ENCODE measurements at regions of chr1 and their contacts with region 1.

Region 1: GRCh38 chr1:180563026-180563827 is 4.5 kb downstream of the OVAAL start:
- DNase-seq: peak in 2 of 5 donors; percentile 35 to 40
- ATAC-seq: peak; percentile 59 to 81 (median 77)
- H3K4me3 ChIP-seq: no peak overlapping the region
- H3K27ac ChIP-seq: peak overlapping the region; percentile 65 to 92 (median 82)
- H3K4me1 ChIP-seq: peaks cover 5 to 71% (median 39%) of the 10 kb centered on the region in 12 donors
- H3K27me3 ChIP-seq: no peaks in the 10 kb centered on the region
- CTCF ChIP-seq: no peak
- POLR2A ChIP-seq: no peak

Region 2: DNA sequence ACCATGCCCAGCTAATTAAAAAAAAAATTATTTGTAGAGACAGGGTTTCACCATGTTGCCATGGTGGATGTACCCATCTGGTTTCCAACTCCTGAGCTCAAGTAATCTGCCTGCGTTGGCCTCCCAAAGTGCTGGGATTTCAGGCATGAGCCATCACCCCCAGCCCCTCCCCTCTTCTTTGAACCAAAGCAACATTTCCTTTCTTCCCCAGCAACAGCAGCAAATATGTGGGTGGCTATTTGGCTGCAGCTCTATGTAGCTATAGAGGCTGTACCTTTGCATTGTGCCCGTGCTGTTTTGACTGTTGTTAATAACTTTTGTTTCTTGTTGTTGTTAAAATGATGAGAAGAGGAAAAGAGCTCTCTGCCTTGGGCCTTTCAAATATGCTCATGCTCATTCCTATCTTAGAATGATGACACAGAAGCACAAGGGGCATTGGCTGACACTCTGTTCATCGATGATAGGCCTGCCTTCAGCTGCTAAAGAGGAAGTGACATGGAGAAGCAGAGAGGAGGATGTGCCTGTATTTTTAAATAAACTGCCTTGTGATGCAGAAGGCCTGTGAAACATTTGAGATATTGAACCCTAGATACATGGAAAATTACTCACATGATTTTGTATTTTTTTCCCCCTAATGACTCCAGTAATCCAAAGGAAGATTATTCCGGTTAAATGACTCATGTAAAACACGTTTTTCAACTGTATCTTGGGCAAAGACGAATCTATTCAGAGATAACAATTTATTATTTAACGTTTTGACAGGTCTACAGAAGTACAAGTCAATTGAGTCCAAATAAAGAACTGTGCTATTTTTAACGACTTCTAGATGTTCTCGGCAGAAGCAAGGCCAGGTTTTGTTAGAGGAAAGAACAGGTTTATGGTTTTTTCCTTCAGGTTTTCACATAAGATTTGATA is 48.0 kb after region 1 on chr1:
- intact Hi-C with region 1: loop called in 1 of 10 experiments (anchors 5 kb)
- DNase-seq: peak in 3 of 5 donors; percentile 35 to 48 (median 36)
- ATAC-seq: peak; percentile 91 to 95 (median 94)
- H3K4me3 ChIP-seq: no peak overlapping the region
- H3K27ac ChIP-seq: peak overlapping the region; percentile 51 to 85 (median 75)
- H3K4me1 ChIP-seq: peaks cover 0 to 27% (median 17%) of the 10 kb centered on the region in 12 donors
- H3K27me3 ChIP-seq: no peaks in the 10 kb centered on the region
- CTCF ChIP-seq: no peak
- POLR2A ChIP-seq: peak in 1 of 2 donors; percentile 19

Region 3: DNA sequence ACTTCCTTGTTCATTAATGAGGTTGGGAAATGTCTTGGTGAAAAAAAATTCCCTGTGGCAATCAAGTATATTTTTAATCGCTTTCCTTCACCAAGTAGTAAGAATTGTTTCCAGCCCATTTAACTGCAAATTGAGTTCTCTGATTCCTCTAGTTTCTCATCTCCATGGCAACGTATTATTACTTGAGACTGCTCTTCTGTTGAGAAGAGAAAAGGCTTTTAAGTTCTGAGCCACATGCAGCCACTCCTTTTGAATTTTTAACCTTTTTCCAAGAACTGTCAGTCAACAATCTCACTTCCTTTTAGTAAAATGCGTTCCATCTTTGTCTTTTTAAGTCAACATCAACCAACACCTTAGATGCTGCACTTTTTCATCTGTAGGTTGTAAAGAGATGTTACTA is 273.8 kb after region 1 on chr1:
- intact Hi-C with region 1: no loop called
- DNase-seq: no peak
- ATAC-seq: no peak
- H3K4me3 ChIP-seq: no peak overlapping the region
- H3K27ac ChIP-seq: no peak overlapping the region
- H3K4me1 ChIP-seq: peaks cover 0 to 6% (median 0%) of the 10 kb centered on the region in 12 donors
- H3K27me3 ChIP-seq: no peaks in the 10 kb centered on the region
- CTCF ChIP-seq: no peak
- POLR2A ChIP-seq: no peak

Measured in heart left ventricle (tissue), 16 donors.